Naive thymus-derived CD4-positive, alpha-beta T cell (primary cell): ENCODE measurements at regions of chrX and their contacts with region 1.

Region 1: GRCh38 chrX:101799387-101799786 is 132.4 kb downstream of the ZMAT1 start:
- DNase-seq: peak; percentile 22 to 87 (median 80)
- ATAC-seq: peak; percentile 100
- H3K4me3 ChIP-seq: no peak overlapping the region
- H3K4me3 Mint-ChIP-seq: peak overlapping the region in 9 of 10 donors; percentile 18 to 77 (median 67)
- H3K27ac ChIP-seq: no peak overlapping the region
- H3K27ac Mint-ChIP-seq: peak overlapping the region in 5 of 9 donors; percentile 12 to 67 (median 59)
- H3K4me1 ChIP-seq: no peaks in the 10 kb centered on the region
- H3K4me1 Mint-ChIP-seq: peaks cover 0 to 16% (median 8%) of the 10 kb centered on the region in 7 donors
- H3K27me3 ChIP-seq: no peaks in the 10 kb centered on the region
- H3K27me3 Mint-ChIP-seq: no peaks in the 10 kb centered on the region

Region 2: DNA sequence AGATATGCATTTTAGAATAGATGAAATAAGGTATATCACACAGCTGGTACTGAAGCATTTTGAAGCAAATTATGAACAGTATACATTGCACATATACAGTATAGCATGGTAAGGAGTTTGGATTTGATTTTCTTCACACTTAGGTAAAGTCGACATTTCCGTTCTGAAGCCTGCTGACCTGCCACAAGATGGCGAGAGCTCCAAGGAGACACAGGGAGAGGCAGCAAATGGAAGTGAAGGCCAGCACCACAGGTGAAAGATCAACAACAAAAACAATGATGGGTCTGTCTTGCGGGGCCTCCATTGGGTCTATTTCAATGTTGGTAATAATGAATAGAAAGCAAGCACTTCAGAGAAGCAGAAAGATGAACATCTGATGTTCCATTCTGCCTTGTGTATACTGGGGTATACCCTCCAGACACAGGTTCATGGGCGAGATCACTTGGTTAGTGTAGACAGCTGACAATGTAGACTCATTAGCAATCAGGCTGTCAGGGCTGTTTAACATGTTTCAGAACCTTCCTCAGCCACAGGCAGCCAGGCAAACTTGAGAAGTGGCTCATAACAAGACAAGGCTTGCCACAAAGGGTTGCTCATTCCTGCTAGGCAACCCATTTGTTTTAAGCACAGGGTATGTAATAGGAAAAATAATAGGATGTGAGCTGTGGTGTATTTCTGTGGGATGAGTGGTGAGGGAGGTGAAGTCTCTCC is 903.9 kb before region 1 on chrX:
- CTCF ChIA-PET with region 1: no interaction called
- POLR2A ChIA-PET with region 1: no interaction called
- intact Hi-C with region 1: loop called in 1 of 2 experiments (anchors 5 kb)
- DNase-seq: peak in 6 of 9 donors; percentile 4 to 47 (median 30)
- ATAC-seq: no peak
- H3K4me3 ChIP-seq: no peak overlapping the region
- H3K4me3 Mint-ChIP-seq: no peak overlapping the region
- H3K27ac ChIP-seq: no peak overlapping the region
- H3K27ac Mint-ChIP-seq: no peak overlapping the region
- H3K4me1 ChIP-seq: no peaks in the 10 kb centered on the region
- H3K4me1 Mint-ChIP-seq: peaks cover 0 to 2% (median 0%) of the 10 kb centered on the region in 7 donors
- H3K27me3 ChIP-seq: no peaks in the 10 kb centered on the region
- H3K27me3 Mint-ChIP-seq: no peaks in the 10 kb centered on the region

Region 3: DNA sequence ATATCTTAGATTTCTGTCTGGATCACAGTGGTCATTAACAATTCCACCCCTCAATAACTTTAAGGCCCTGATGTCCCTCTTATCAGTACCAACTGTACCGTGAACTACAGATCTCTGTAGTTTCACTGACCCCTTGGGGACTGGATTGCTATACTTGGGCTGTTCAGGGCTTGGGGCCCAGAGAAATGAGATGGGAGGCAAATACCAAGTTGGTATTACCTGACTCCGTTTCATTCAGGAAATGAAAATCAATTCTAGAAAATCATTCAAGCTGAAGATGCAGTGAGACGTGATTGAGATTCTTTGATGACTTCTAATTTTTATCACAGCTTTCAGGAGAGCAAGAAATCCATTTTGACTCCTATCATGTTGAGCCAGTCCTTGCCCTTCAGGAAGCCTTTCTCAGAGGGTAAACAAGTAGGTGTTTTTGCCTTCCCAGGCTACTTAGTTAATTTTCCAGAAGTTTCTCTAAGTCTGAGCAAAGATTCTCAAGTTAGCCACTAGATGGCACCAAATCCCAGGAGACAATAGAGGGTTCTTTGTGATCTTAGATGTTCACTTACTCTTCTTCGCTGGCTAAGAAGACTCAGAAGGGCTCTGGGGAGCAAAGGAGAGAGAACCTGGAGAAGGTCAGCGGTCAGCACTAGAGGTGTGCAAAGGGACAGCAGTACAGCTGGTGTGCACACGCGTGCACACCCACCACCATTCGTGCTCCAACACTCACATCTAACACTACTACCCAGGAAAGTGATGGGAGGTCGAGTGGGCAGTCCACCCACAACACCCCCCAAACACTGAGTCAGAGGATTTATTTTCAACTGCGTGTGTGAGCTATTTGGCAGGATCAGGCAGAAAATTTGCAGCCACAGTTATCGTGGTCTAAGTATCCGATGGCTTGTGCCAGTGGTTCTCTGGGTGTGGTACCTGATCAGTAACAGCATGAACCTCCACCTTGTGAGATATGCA is 383.9 kb before region 1 on chrX:
- CTCF ChIA-PET with region 1: interaction called, 4 read pairs
- POLR2A ChIA-PET with region 1: interaction called, 3 read pairs
- intact Hi-C with region 1: loop called (anchors 1 kb)
- DNase-seq: peak in 8 of 9 donors; percentile 23 to 70 (median 62)
- ATAC-seq: peak; percentile 83
- H3K4me3 ChIP-seq: no peak overlapping the region
- H3K4me3 Mint-ChIP-seq: peak overlapping the region; percentile 5 to 59 (median 41)
- H3K27ac ChIP-seq: peak overlapping the region; percentile 66
- H3K27ac Mint-ChIP-seq: peak overlapping the region; percentile 72 to 97 (median 88)
- H3K4me1 ChIP-seq: peaks cover 3 to 8% of the 10 kb centered on the region in 2 donors
- H3K4me1 Mint-ChIP-seq: peaks cover 16 to 59% (median 50%) of the 10 kb centered on the region in 7 donors
- H3K27me3 ChIP-seq: no peaks in the 10 kb centered on the region
- H3K27me3 Mint-ChIP-seq: no peaks in the 10 kb centered on the region

Region 4: DNA sequence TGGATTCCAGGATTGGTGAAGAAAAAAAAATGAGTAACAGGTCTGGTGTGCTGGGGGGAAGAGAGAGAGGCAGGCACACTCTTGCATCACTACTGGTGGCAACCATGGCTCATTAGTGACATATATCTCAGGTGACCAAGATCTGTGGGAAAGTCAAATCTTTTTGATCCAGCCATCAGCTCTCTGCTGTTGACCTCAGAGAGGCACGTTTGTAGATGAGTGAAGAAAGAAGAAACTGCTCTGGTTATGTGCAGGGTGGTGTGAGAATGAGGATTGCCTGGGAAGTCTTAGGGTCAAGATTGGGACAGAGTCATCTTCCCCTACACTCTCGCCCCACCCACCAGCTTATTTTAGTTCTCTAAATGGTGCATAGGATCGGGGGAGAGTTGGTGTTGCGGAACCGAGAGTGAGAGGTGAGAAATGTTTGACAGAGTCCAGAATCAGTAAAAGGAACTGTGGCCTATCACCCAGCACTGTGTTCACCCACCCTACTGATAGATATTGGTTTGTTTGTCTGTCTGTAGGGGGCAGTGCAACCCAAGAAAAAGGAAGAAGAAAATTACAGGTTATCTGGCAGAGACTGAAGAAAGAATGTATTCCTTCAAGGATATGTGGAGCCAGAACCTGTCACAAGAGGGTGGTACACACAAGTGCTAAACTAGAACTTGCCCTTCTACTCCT is 203.5 kb before region 1 on chrX:
- CTCF ChIA-PET with region 1: no interaction called
- POLR2A ChIA-PET with region 1: no interaction called
- intact Hi-C with region 1: loop called (anchors 5 kb)
- DNase-seq: peak in 7 of 9 donors; percentile 32 to 70 (median 54)
- ATAC-seq: peak; percentile 86
- H3K4me3 ChIP-seq: no peak overlapping the region
- H3K4me3 Mint-ChIP-seq: no peak overlapping the region
- H3K27ac ChIP-seq: no peak overlapping the region
- H3K27ac Mint-ChIP-seq: no peak overlapping the region
- H3K4me1 ChIP-seq: no peaks in the 10 kb centered on the region
- H3K4me1 Mint-ChIP-seq: no peaks in the 10 kb centered on the region
- H3K27me3 ChIP-seq: no peaks in the 10 kb centered on the region
- H3K27me3 Mint-ChIP-seq: peaks cover 7 to 22% (median 12%) of the 10 kb centered on the region in 5 donors

Region 5: GRCh38 chrX:101658661-101659491 is 140.5 kb before region 1 on chrX:
- CTCF ChIA-PET with region 1: no interaction called
- POLR2A ChIA-PET with region 1: no interaction called
- intact Hi-C with region 1: loop called in 1 of 2 experiments (anchors 10 kb)
- DNase-seq: peak in 8 of 9 donors; percentile 50 to 70 (median 52)
- ATAC-seq: peak; percentile 91
- H3K4me3 ChIP-seq: peak overlapping the region; percentile 61
- H3K4me3 Mint-ChIP-seq: peak overlapping the region; percentile 80 to 91 (median 88)
- H3K27ac ChIP-seq: peak overlapping the region; percentile 73
- H3K27ac Mint-ChIP-seq: peak overlapping the region; percentile 49 to 90 (median 85)
- H3K4me1 ChIP-seq: no peaks in the 10 kb centered on the region
- H3K4me1 Mint-ChIP-seq: peaks cover 8 to 26% (median 14%) of the 10 kb centered on the region in 7 donors
- H3K27me3 ChIP-seq: no peaks in the 10 kb centered on the region
- H3K27me3 Mint-ChIP-seq: peaks cover 0 to 9% (median 0%) of the 10 kb centered on the region in 5 donors

Region 6: GRCh38 chrX:101931488-101932248 is 132.3 kb after region 1 on chrX and contains the start of gene ZMAT1:
- CTCF ChIA-PET with region 1: no interaction called
- POLR2A ChIA-PET with region 1: no interaction called
- intact Hi-C with region 1: loop called in 1 of 2 experiments (anchors 5 kb)
- DNase-seq: peak; percentile 73 to 92 (median 87)
- ATAC-seq: peak; percentile 93
- H3K4me3 ChIP-seq: peak within 1 kb of the TSS; percentile 63
- H3K4me3 Mint-ChIP-seq: peak within 1 kb of the TSS; percentile 80 to 95 (median 88)
- H3K27ac ChIP-seq: peak within 1 kb of the TSS; percentile 89
- H3K27ac Mint-ChIP-seq: peak within 1 kb of the TSS; percentile 87 to 99 (median 96)
- H3K4me1 ChIP-seq: peaks cover 0 to 8% of the 10 kb centered on the region in 2 donors
- H3K4me1 Mint-ChIP-seq: peaks cover 8 to 44% (median 33%) of the 10 kb centered on the region in 7 donors
- H3K27me3 ChIP-seq: no peaks in the 10 kb centered on the region
- H3K27me3 Mint-ChIP-seq: no peaks in the 10 kb centered on the region
- total RNA-seq, gene ZMAT1: 3.0 to 48.3 (median 32.2) TPM